ENCODE measurements at regions of chr21 and their contacts with region 1.

Region 1: GRCh38 chr21:32592929-32593502 is 7.7 kb upstream of the TCP10L start:
- DNase-seq: no peak

Region 2: GRCh38 chr21:31725202-31725839 is 867.7 kb before region 1 on chr21:
- intact Hi-C with region 1: loop called in 1 of 2 experiments (anchors 5 kb)
- DNase-seq: no peak

Region 3: GRCh38 chr21:32538147-32538792 is 54.7 kb before region 1 on chr21:
- intact Hi-C with region 1: no loop called
- DNase-seq: no peak

Region 4: DNA sequence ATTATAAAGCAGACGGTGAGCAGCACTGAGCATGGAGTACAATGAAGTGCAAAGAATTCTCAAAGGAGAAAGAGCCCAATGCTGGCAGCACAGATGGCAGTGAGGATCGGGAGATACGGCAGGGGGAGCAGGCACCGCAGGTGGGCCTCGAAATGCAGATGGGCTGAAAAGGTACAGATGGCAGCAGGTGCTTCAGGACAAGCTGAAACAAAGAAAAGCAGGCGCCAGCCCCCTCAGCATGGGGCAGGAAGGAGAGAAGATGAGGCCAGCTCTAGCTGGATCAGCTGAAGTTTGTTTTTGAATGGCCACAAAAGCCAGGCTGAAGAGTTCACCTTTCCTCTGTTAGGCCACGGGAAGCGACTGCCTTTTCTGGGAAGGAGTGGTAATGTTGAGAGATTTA is 11.4 kb after region 1 on chr21:
- intact Hi-C with region 1: no loop called
- DNase-seq: no peak